ENCODE measurements at regions of chr5 and their contacts with region 1.

Region 1: GRCh38 chr5:104494043-104494442 is 931.5 kb upstream of the NUDT12 start:
- DNase-seq: no peak
- ATAC-seq: no peak
- H3K4me3 Mint-ChIP-seq: no peak overlapping the region
- H3K27ac Mint-ChIP-seq: no peak overlapping the region
- H3K4me1 Mint-ChIP-seq: no peaks in the 10 kb centered on the region
- H3K27me3 Mint-ChIP-seq: no peaks in the 10 kb centered on the region
- CTCF ChIP-seq: no peak

Region 2: GRCh38 chr5:105503950-105504349 is 1009.9 kb after region 1 on chr5:
- CTCF ChIA-PET with region 1: no interaction called
- POLR2A ChIA-PET with region 1: no interaction called
- intact Hi-C with region 1: loop called (anchors 5 kb)
- DNase-seq: no peak
- ATAC-seq: no peak
- H3K4me3 Mint-ChIP-seq: no peak overlapping the region
- H3K27ac Mint-ChIP-seq: no peak overlapping the region
- H3K4me1 Mint-ChIP-seq: no peaks in the 10 kb centered on the region
- H3K27me3 Mint-ChIP-seq: no peaks in the 10 kb centered on the region
- CTCF ChIP-seq: no peak